ENCODE measurements at regions of chr7 and their contacts with region 1.

Region 1: DNA sequence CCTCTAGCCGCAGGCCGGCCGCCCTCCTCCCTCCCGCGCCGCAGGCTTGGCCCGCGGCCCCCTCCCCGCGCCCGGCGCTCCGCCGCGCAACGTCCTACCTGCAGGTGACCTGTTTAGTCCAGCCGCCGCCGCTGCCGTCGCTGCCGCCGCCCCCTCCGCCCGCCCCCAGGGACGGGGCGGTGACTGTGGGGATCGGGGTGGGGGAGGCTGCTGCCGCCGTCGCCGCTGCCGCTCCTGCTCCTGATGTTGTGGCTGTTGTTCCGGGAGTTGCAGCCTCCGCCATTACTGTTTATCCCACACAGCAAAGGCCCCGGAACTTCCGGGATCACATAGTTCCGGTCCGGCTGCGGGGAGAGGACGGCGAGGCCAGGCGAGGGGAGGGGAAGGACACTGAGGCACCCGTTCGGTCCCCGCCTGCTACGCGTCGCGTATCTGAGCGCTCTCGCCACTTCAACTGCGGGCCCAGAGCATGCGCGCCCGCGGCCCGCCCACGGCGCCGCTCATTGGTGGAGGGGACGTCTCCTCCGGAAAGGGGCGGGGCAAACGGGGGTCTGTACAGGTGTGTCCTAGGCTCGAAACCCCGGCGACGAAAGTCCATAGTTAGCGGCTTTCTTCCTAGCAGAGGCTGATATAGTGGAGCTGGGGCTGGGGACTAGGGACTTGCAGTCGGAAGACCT is at the start of gene MKRN1:
- DNase-seq: peak; percentile 90 to 93 (median 90)
- H3K4me3 ChIP-seq: peak within 1 kb of the TSS; percentile 59 to 71
- H3K4me3 Mint-ChIP-seq: peak within 1 kb of the TSS; percentile 95 to 100 (median 99)
- H3K27ac ChIP-seq: peak within 1 kb of the TSS; percentile 75
- H3K27ac Mint-ChIP-seq: peak within 1 kb of the TSS; percentile 95 to 99 (median 98)
- H3K4me1 ChIP-seq: peaks cover 25% of the 10 kb centered on the region
- H3K4me1 Mint-ChIP-seq: peaks cover 16 to 40% (median 25%) of the 10 kb centered on the region in 4 donors
- H3K27me3 ChIP-seq: no peaks in the 10 kb centered on the region
- H3K27me3 Mint-ChIP-seq: no peaks in the 10 kb centered on the region
- total RNA-seq, gene MKRN1: 140 to 156 TPM

Region 2: DNA sequence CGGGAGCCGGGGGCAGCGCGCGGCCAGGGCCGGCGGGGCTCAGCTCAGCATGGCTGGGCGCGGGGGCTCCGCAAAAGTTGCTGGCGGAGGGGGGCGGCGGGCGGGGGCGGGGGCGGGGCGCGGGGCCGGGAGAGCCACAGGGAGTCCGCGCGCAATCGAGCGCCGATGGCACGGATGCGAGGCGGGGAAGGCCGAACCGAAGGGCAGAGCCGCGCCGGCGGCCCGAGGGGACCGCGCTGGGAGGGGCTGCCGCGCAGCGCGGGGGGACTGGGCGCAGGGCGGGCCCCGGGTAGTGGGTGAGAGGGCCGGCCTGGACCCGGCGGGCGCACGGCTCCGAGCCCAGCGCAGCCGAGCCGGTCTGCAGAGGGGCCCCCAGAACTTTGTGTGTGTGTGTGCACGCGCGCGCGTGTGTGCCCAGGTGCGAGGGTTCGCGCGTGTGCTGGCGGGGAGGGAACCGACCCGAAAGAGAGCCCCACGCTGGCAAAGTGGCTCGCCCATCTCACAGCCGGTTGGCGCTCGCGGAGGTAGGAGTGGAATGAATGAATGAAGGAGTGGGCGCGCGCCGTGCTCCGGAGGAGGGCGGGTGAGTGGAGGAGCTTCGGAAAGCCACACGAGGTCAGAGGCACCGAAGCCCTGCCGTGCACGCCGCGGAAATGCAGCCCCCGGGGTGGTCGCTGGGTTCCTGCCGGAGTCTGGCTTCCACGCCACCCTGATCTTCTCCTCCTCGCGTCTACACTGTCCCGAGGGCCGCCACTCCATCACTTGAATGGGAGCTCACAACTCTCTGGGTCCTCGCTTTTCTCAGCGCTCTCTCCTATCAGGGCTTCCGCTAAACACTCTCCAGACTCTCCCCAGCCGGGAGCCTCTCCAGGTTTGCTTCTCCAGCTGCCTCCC is 701.0 kb before region 1 on chr7 and contains the start of gene HIPK2:
- CTCF ChIA-PET with region 1: no interaction called
- POLR2A ChIA-PET with region 1: no interaction called
- intact Hi-C with region 1: loop called (anchors 10 kb)
- DNase-seq: peak; percentile 69 to 80 (median 74)
- H3K4me3 ChIP-seq: peak within 1 kb of the TSS; percentile 73 to 92
- H3K4me3 Mint-ChIP-seq: peak within 1 kb of the TSS; percentile 96 to 100 (median 99)
- H3K27ac ChIP-seq: peak within 1 kb of the TSS; percentile 64
- H3K27ac Mint-ChIP-seq: peak within 1 kb of the TSS; percentile 97 to 99 (median 98)
- H3K4me1 ChIP-seq: peaks cover 40% of the 10 kb centered on the region
- H3K4me1 Mint-ChIP-seq: peaks cover 30 to 57% (median 40%) of the 10 kb centered on the region in 4 donors
- H3K27me3 ChIP-seq: no peaks in the 10 kb centered on the region
- H3K27me3 Mint-ChIP-seq: peaks cover 2 to 7% of the 10 kb centered on the region in 2 donors
- total RNA-seq, gene HIPK2: 31.2 to 34.1 TPM

Region 3: DNA sequence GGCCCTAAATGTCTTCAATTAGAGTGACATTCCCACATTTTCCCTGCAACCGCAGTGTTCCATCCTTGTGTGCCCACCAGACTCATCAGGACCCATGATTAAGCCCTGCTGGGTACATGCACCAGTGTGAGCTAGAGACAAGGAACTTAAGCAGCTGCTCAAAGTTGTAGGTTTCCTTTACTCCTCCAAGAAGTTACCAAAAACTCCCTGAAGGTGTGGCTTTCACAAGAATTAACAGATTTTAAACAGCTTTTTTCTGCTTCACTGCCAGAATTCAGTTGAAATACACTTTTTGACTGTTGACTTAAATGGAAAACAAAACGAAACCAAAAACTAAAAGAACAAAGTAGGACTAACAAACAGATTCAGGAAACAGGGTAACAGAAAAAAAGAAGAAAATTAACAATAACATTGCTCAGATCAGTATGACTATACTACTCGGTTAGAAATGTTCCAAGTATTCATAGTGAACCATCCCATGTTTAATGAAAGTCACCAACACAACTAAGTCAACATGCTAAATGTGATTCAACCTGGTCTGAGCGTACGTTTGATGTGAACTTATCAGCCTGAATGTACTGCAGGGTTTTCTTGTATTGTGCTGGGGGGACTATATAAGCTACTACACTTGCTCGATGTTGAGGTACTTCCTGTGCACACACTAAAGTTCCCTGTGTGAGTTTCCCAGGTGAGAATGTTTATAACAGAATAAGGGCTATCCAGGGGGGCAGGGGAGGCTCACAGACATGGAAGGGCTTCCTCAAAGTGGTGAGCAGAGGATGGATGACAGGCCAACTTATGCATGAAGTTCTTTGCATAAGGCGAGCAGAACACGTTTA is 103.1 kb before region 1 on chr7:
- CTCF ChIA-PET with region 1: interaction called, 3 read pairs
- POLR2A ChIA-PET with region 1: interaction called, 11 read pairs
- intact Hi-C with region 1: no loop called
- DNase-seq: peak in 4 of 5 donors; percentile 30 to 48 (median 40)
- H3K4me3 ChIP-seq: peak overlapping the region; percentile 14 to 56
- H3K4me3 Mint-ChIP-seq: peak overlapping the region; percentile 75 to 99 (median 86)
- H3K27ac ChIP-seq: peak overlapping the region; percentile 59
- H3K27ac Mint-ChIP-seq: peak overlapping the region; percentile 84 to 97 (median 93)
- H3K4me1 ChIP-seq: peaks cover 15% of the 10 kb centered on the region
- H3K4me1 Mint-ChIP-seq: peaks cover 10 to 23% (median 13%) of the 10 kb centered on the region in 4 donors
- H3K27me3 ChIP-seq: no peaks in the 10 kb centered on the region
- H3K27me3 Mint-ChIP-seq: no peaks in the 10 kb centered on the region

Region 4: DNA sequence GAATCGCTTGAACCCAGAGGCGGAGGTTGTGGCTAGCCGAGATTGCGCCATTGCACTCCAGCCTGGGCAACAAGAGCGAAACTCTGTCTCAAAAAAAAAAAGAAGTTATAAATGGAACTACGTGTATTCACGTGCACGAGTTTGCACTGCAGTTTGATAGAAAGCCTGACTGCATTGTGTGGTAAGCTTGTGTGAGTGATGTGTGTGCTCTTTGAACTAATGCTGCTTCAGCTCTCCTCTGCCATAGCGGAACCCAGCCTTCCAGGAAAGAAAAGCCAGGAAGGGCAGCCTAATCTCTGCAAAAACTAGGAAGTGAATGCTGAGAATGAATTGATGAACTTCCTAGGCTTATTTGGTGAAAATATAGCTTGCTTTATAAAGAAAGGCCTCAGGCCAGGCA is 15.7 kb after region 1 on chr7:
- CTCF ChIA-PET with region 1: interaction called, 214 read pairs
- POLR2A ChIA-PET with region 1: interaction called, 38 read pairs
- intact Hi-C with region 1: loop called (anchors 1 kb)
- DNase-seq: no peak
- H3K4me3 ChIP-seq: no peak overlapping the region
- H3K4me3 Mint-ChIP-seq: no peak overlapping the region
- H3K27ac ChIP-seq: no peak overlapping the region
- H3K27ac Mint-ChIP-seq: no peak overlapping the region
- H3K4me1 ChIP-seq: no peaks in the 10 kb centered on the region
- H3K4me1 Mint-ChIP-seq: peaks cover 0 to 2% (median under 1%) of the 10 kb centered on the region in 4 donors
- H3K27me3 ChIP-seq: no peaks in the 10 kb centered on the region
- H3K27me3 Mint-ChIP-seq: no peaks in the 10 kb centered on the region

Region 5: GRCh38 chr7:140673063-140673773 is 194.0 kb after region 1 on chr7:
- CTCF ChIA-PET with region 1: interaction called, 3 read pairs
- POLR2A ChIA-PET with region 1: interaction called, 17 read pairs
- intact Hi-C with region 1: loop called (anchors 1 kb)
- DNase-seq: peak; percentile 68 to 78 (median 74)
- H3K4me3 ChIP-seq: peak overlapping the region; percentile 61 to 65
- H3K4me3 Mint-ChIP-seq: peak overlapping the region; percentile 81 to 95 (median 88)
- H3K27ac ChIP-seq: peak overlapping the region; percentile 74
- H3K27ac Mint-ChIP-seq: peak overlapping the region; percentile 82 to 94 (median 92)
- H3K4me1 ChIP-seq: peaks cover 28% of the 10 kb centered on the region
- H3K4me1 Mint-ChIP-seq: peaks cover 17 to 42% (median 22%) of the 10 kb centered on the region in 4 donors
- H3K27me3 ChIP-seq: no peaks in the 10 kb centered on the region
- H3K27me3 Mint-ChIP-seq: no peaks in the 10 kb centered on the region

Region 6: GRCh38 chr7:140810830-140811556 is 331.8 kb after region 1 on chr7:
- CTCF ChIA-PET with region 1: interaction called, 3 read pairs
- POLR2A ChIA-PET with region 1: no interaction called
- intact Hi-C with region 1: loop called (anchors 10 kb)
- DNase-seq: peak; percentile 64 to 67 (median 65)
- H3K4me3 ChIP-seq: no peak overlapping the region
- H3K4me3 Mint-ChIP-seq: no peak overlapping the region
- H3K27ac ChIP-seq: no peak overlapping the region
- H3K27ac Mint-ChIP-seq: peak overlapping the region in 5 of 7 donors; percentile 0 to 87 (median 74)
- H3K4me1 ChIP-seq: no peaks in the 10 kb centered on the region
- H3K4me1 Mint-ChIP-seq: peaks cover 5 to 7% (median 6%) of the 10 kb centered on the region in 4 donors
- H3K27me3 ChIP-seq: no peaks in the 10 kb centered on the region
- H3K27me3 Mint-ChIP-seq: no peaks in the 10 kb centered on the region

Region 7: GRCh38 chr7:140841166-140841715 is 362.0 kb after region 1 on chr7:
- CTCF ChIA-PET with region 1: no interaction called
- POLR2A ChIA-PET with region 1: no interaction called
- intact Hi-C with region 1: no loop called
- DNase-seq: no peak
- H3K4me3 ChIP-seq: no peak overlapping the region
- H3K4me3 Mint-ChIP-seq: no peak overlapping the region
- H3K27ac ChIP-seq: no peak overlapping the region
- H3K27ac Mint-ChIP-seq: no peak overlapping the region
- H3K4me1 ChIP-seq: no peaks in the 10 kb centered on the region
- H3K4me1 Mint-ChIP-seq: peaks cover 0 to 3% (median under 1%) of the 10 kb centered on the region in 4 donors
- H3K27me3 ChIP-seq: no peaks in the 10 kb centered on the region
- H3K27me3 Mint-ChIP-seq: no peaks in the 10 kb centered on the region

Region 8: GRCh38 chr7:141737834-141738591 is 1258.8 kb after region 1 on chr7 and contains the start of gene SSBP1:
- CTCF ChIA-PET with region 1: no interaction called
- POLR2A ChIA-PET with region 1: interaction called, 5 read pairs
- intact Hi-C with region 1: loop called (anchors 2 kb)
- DNase-seq: peak; percentile 93 to 95 (median 93)
- H3K4me3 ChIP-seq: peak within 1 kb of the TSS; percentile 94 to 95
- H3K4me3 Mint-ChIP-seq: peak within 1 kb of the TSS; percentile 98 to 100 (median 99)
- H3K27ac ChIP-seq: peak within 1 kb of the TSS; percentile 85
- H3K27ac Mint-ChIP-seq: peak within 1 kb of the TSS; percentile 96 to 99 (median 99)
- H3K4me1 ChIP-seq: peaks cover 36% of the 10 kb centered on the region
- H3K4me1 Mint-ChIP-seq: peaks cover 26 to 60% (median 38%) of the 10 kb centered on the region in 4 donors
- H3K27me3 ChIP-seq: no peaks in the 10 kb centered on the region
- H3K27me3 Mint-ChIP-seq: no peaks in the 10 kb centered on the region
- total RNA-seq, gene SSBP1: 88.2 to 91.2 TPM

Region 9: GRCh38 chr7:141960687-141961422 is 1481.7 kb after region 1 on chr7:
- CTCF ChIA-PET with region 1: no interaction called
- POLR2A ChIA-PET with region 1: no interaction called
- intact Hi-C with region 1: no loop called
- DNase-seq: no peak
- H3K4me3 ChIP-seq: no peak overlapping the region
- H3K4me3 Mint-ChIP-seq: no peak overlapping the region
- H3K27ac ChIP-seq: no peak overlapping the region
- H3K27ac Mint-ChIP-seq: no peak overlapping the region
- H3K4me1 ChIP-seq: no peaks in the 10 kb centered on the region
- H3K4me1 Mint-ChIP-seq: no peaks in the 10 kb centered on the region
- H3K27me3 ChIP-seq: no peaks in the 10 kb centered on the region
- H3K27me3 Mint-ChIP-seq: peaks cover 0 to 2% of the 10 kb centered on the region in 2 donors

Measured in CD4-positive, alpha-beta memory T cell (primary cell).